ENCODE measurements at regions of chr6 and their contacts with region 1.

Region 1: DNA sequence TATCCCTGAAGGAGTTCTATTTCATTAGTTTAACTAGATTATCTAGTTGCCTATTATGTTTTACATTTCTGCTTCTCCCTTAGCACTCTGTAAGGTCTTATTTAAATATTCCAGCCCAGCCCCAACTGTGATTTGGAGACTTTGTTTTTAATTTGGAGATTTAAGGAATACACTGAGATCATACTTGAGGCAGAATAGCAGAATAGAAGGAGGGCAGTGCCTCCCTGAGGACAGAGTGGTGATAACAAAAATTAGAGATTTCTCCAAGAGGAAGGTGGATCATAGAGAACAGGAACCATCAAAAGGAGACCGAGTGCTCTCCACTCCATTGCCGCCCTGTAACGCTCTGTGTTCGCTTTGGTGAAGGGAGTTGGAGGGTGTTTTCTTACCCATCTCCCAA is 14.8 kb upstream of the CD164 start:
- DNase-seq: no peak
- H3K4me3 ChIP-seq: no peak overlapping the region
- H3K27ac ChIP-seq: no peak overlapping the region
- H3K4me1 ChIP-seq: 0 out of 2 replicates have a peak, but pooled peaks cover 5% of the 10 kb centered on the region
- H3K27me3 ChIP-seq: no peaks in the 10 kb centered on the region
- CTCF ChIP-seq: peak; percentile 64

Region 2: DNA sequence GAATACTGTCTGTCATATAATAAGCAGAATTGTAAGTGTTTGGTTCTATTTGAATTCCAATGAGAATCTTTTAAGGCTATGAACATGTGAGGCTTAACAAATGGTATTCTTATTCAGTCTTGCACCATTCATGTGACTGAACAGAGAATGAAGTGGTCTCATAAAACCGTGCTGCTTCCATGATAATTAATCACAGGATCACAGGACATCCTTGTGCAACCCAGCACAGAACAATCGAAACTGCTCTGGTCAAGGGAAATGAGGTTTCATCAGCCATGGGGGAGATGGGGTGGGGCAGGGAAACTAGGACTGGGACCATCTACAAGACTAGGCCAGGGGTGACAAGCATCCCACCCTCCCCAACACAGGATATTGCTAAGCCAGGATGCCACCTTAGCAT is 37.4 kb after region 1 on chr6:
- CTCF ChIA-PET with region 1: no interaction called
- POLR2A ChIA-PET with region 1: interaction called, 16 read pairs
- intact Hi-C with region 1: no loop called
- DNase-seq: no peak
- H3K4me3 ChIP-seq: no peak overlapping the region
- H3K27ac ChIP-seq: peak overlapping the region; percentile 28
- H3K4me1 ChIP-seq: peaks cover 11% of the 10 kb centered on the region
- H3K27me3 ChIP-seq: no peaks in the 10 kb centered on the region
- CTCF ChIP-seq: no peak